HepG2 (cell line): ENCODE measurements at regions of chr5 and their contacts with region 1.

Region 1: GRCh38 chr5:134845852-134846640 is at the start of gene C5orf24:
- DNase-seq: peak; percentile 88
- ATAC-seq: peak; percentile 96
- H3K4me3 ChIP-seq: peak within 1 kb of the TSS; percentile 72 to 81 (median 74)
- H3K27ac ChIP-seq: peak within 1 kb of the TSS; percentile 94
- H3K4me1 ChIP-seq: peaks cover 50% of the 10 kb centered on the region
- H3K27me3 ChIP-seq: no peaks in the 10 kb centered on the region
- CTCF ChIP-seq: no peak; the same call in 1 of the 2 replicates
- EP300 ChIP-seq: no peak
- POLR2A ChIP-seq: peak; percentile 93 to 94
- RAD21 ChIP-seq: peak; percentile 71
- total RNA-seq, gene C5orf24: 41.5 and 52.6 TPM in 2 replicates

Region 2: GRCh38 chr5:134813407-134813806 is 32.6 kb before region 1 on chr5:
- CTCF ChIA-PET with region 1: no interaction called
- POLR2A ChIA-PET with region 1: no interaction called
- in situ Hi-C with region 1: no loop called
- intact Hi-C with region 1: loop called (anchors 5 kb)
- DNase-seq: no peak
- ATAC-seq: no peak
- H3K4me3 ChIP-seq: no peak overlapping the region
- H3K27ac ChIP-seq: no peak overlapping the region
- H3K4me1 ChIP-seq: no peaks in the 10 kb centered on the region
- H3K27me3 ChIP-seq: no peaks in the 10 kb centered on the region
- CTCF ChIP-seq: no peak
- EP300 ChIP-seq: no peak
- POLR2A ChIP-seq: no peak
- RAD21 ChIP-seq: no peak

Region 3: GRCh38 chr5:134873987-134874830 is 28.2 kb after region 1 on chr5 and contains the start of gene TXNDC15:
- CTCF ChIA-PET with region 1: no interaction called
- POLR2A ChIA-PET with region 1: interaction called, 37 read pairs
- in situ Hi-C with region 1: no loop called
- intact Hi-C with region 1: no loop called
- DNase-seq: peak; percentile 66
- ATAC-seq: peak; percentile 94
- H3K4me3 ChIP-seq: peak within 1 kb of the TSS; percentile 72 to 96 (median 94)
- H3K27ac ChIP-seq: peak within 1 kb of the TSS; percentile 84
- H3K4me1 ChIP-seq: peaks cover 31% of the 10 kb centered on the region
- H3K27me3 ChIP-seq: no peaks in the 10 kb centered on the region; a peak in 1 of 5 replicates
- CTCF ChIP-seq: peak; percentile 32; the same call in 1 of the 2 replicates
- EP300 ChIP-seq: no peak
- POLR2A ChIP-seq: peak; percentile 82 to 90
- RAD21 ChIP-seq: no peak; the same call in 1 of the 2 replicates
- total RNA-seq, gene TXNDC15: 33.6 and 49.9 TPM in 2 replicates

Region 4: GRCh38 chr5:135569755-135570452 is 723.9 kb after region 1 on chr5:
- CTCF ChIA-PET with region 1: no interaction called
- POLR2A ChIA-PET with region 1: no interaction called
- in situ Hi-C with region 1: no loop called
- intact Hi-C with region 1: no loop called
- DNase-seq: peak; percentile 27
- ATAC-seq: peak; percentile 84
- H3K4me3 ChIP-seq: no peak overlapping the region
- H3K27ac ChIP-seq: no peak overlapping the region
- H3K4me1 ChIP-seq: no peaks in the 10 kb centered on the region
- H3K27me3 ChIP-seq: peaks cover 2 to 7% of the 10 kb centered on the region in 2 experiments; a peak in 4 of 5 replicates
- CTCF ChIP-seq: peak; percentile 61
- EP300 ChIP-seq: no peak
- POLR2A ChIP-seq: no peak
- RAD21 ChIP-seq: 0 out of 2 replicates have a peak, but pooled peaks have one; percentile 13